AG04450 (cell line): ENCODE measurements at regions of chr2 and their contacts with region 1.

Region 1: GRCh38 chr2:55718165-55719008 is 24.7 kb upstream of the PNPT1 start:
- DNase-seq: peak; percentile 43
- H3K4me3 ChIP-seq: no peak overlapping the region
- H3K27ac ChIP-seq: no peak overlapping the region
- H3K27me3 ChIP-seq: peaks cover 3% of the 10 kb centered on the region
- CTCF ChIP-seq: peak; percentile 85

Region 2: GRCh38 chr2:55460562-55460961 is 257.8 kb before region 1 on chr2:
- CTCF ChIA-PET with region 1: no interaction called
- POLR2A ChIA-PET with region 1: no interaction called
- DNase-seq: no peak
- H3K4me3 ChIP-seq: no peak overlapping the region
- H3K27ac ChIP-seq: no peak overlapping the region
- H3K27me3 ChIP-seq: no peaks in the 10 kb centered on the region
- CTCF ChIP-seq: no peak

Region 3: DNA sequence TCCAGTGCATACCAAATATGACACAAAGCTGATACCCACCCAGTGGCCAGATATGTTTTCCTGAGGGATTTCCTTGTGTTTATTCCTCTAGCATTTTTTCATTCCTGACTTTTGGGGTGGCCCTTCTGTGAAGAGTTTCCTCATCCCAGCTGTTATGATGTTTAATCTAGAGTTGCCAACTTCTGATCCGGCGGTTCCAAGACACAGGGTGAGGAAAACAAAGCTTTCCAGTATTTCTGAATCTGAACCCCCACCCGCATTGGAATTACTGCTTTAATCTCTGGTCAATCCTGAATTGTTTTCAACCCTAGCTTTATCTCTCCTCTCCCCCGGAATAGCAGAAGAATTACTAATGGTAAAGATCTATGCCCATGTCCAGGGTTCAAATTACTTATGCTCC is 14.5 kb after region 1 on chr2:
- CTCF ChIA-PET with region 1: interaction called, 29 read pairs
- POLR2A ChIA-PET with region 1: no interaction called
- DNase-seq: no peak
- H3K4me3 ChIP-seq: no peak overlapping the region
- H3K27ac ChIP-seq: peak overlapping the region; percentile 34
- H3K27me3 ChIP-seq: no peaks in the 10 kb centered on the region
- CTCF ChIP-seq: no peak

Region 4: GRCh38 chr2:55948176-55948921 is 230.0 kb after region 1 on chr2:
- CTCF ChIA-PET with region 1: interaction called, 10 read pairs
- POLR2A ChIA-PET with region 1: no interaction called
- DNase-seq: no peak
- H3K4me3 ChIP-seq: no peak overlapping the region
- H3K27ac ChIP-seq: no peak overlapping the region
- H3K27me3 ChIP-seq: no peaks in the 10 kb centered on the region
- CTCF ChIP-seq: no peak

Region 5: DNA sequence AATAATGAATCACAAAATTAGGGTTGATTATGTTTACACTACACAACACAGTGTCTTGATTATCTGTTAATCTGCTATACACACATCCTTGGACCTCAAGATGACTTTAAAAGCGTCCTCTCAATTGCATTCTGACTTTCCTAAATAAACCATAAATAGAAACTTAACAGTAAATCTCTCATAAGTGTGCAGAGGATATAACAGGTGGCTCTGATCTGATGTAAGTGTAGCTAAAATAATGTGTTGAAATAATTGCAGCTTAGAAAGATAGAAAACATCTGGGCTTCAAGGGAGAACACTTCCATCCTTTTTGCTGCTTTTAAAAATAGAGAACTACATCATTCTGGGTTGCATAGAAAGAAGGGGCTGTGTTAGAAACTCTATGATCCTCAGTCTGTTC is 283.6 kb after region 1 on chr2:
- CTCF ChIA-PET with region 1: interaction called, 19 read pairs
- POLR2A ChIA-PET with region 1: no interaction called
- DNase-seq: no peak
- H3K4me3 ChIP-seq: no peak overlapping the region
- H3K27ac ChIP-seq: no peak overlapping the region
- H3K27me3 ChIP-seq: no peaks in the 10 kb centered on the region
- CTCF ChIP-seq: no peak

Region 6: DNA sequence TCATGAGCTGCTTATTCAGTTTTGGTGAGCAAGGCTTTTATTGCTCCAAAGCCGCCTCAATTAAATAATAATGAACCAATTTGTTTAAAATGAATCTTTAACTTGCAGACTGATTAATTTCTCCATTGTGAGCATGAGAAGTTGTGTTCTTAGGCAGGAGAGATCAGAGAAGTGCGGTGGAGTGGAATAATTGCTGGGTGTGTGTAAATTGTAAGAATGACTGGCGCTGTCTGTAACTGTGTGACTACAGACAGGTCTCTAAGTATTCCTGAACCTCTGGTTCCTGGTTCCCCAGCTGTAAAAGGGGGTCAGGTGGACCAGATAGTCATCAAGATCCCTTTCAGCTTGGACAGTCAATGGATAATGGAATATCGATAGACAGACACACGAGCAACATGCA is 303.2 kb after region 1 on chr2:
- CTCF ChIA-PET with region 1: interaction called, 123 read pairs
- POLR2A ChIA-PET with region 1: no interaction called
- DNase-seq: no peak
- H3K4me3 ChIP-seq: no peak overlapping the region
- H3K27ac ChIP-seq: no peak overlapping the region
- H3K27me3 ChIP-seq: peaks cover 6% of the 10 kb centered on the region
- CTCF ChIP-seq: no peak

Region 7: GRCh38 chr2:56133931-56134629 is 415.7 kb after region 1 on chr2:
- CTCF ChIA-PET with region 1: interaction called, 12 read pairs
- POLR2A ChIA-PET with region 1: no interaction called
- DNase-seq: no peak
- H3K4me3 ChIP-seq: no peak overlapping the region
- H3K27ac ChIP-seq: no peak overlapping the region
- H3K27me3 ChIP-seq: no peaks in the 10 kb centered on the region
- CTCF ChIP-seq: no peak